ENCODE measurements at regions of chr15 and their contacts with region 1.

Region 1: GRCh38 chr15:66851226-66852071 is 149.4 kb downstream of the SMAD6 start:
- DNase-seq: peak; percentile 84 to 91
- H3K4me3 ChIP-seq: peak overlapping the region in 1 of 2 donors; percentile 18
- H3K27ac ChIP-seq: peak overlapping the region; percentile 82
- H3K4me1 ChIP-seq: peaks cover 32% of the 10 kb centered on the region
- H3K27me3 ChIP-seq: no peaks in the 10 kb centered on the region
- CTCF ChIP-seq: peak; percentile 87 to 98 (median 98)
- POLR2A ChIP-seq: no peak

Region 2: DNA sequence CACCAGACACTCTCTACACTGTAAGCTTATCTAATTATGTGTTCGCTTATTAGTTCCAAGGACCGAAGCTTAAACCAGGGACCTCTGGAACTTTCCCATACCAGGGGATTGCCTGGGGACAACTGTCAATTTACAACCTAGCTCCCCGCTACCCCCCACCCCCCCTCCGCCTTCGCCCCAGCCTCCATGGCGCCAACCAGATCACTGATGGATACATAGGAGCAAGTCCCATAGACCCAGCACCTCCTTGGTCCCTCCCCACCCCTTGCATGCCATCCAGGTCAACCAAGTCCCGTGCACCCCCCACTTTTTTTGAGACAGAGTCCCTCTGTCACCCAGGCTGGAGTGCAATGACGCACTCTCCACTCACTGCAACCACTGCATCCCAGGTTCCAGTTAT is 1716.9 kb before region 1 on chr15:
- intact Hi-C with region 1: no loop called
- DNase-seq: no peak
- H3K4me3 ChIP-seq: peak overlapping the region in 1 of 2 donors; percentile 69
- H3K27ac ChIP-seq: no peak overlapping the region
- H3K4me1 ChIP-seq: peaks cover 34% of the 10 kb centered on the region
- H3K27me3 ChIP-seq: no peaks in the 10 kb centered on the region
- CTCF ChIP-seq: no peak
- POLR2A ChIP-seq: no peak

Region 3: GRCh38 chr15:66603301-66604179 is 247.9 kb before region 1 on chr15:
- intact Hi-C with region 1: loop called (anchors 5 kb)
- DNase-seq: no peak
- H3K4me3 ChIP-seq: no peak overlapping the region
- H3K27ac ChIP-seq: no peak overlapping the region
- H3K4me1 ChIP-seq: no peaks in the 10 kb centered on the region
- H3K27me3 ChIP-seq: no peaks in the 10 kb centered on the region
- CTCF ChIP-seq: peak; percentile 33 to 89 (median 80)
- POLR2A ChIP-seq: no peak

Region 4: GRCh38 chr15:66619151-66619903 is 232.1 kb before region 1 on chr15:
- intact Hi-C with region 1: loop called (anchors 5 kb)
- DNase-seq: no peak
- H3K4me3 ChIP-seq: no peak overlapping the region
- H3K27ac ChIP-seq: peak overlapping the region; percentile 83
- H3K4me1 ChIP-seq: peaks cover 50% of the 10 kb centered on the region
- H3K27me3 ChIP-seq: no peaks in the 10 kb centered on the region
- CTCF ChIP-seq: peak; percentile 73 to 86 (median 80)
- POLR2A ChIP-seq: no peak

Region 5: GRCh38 chr15:66707310-66708082 is 144.0 kb before region 1 on chr15:
- intact Hi-C with region 1: loop called (anchors 2 kb)
- DNase-seq: no peak
- H3K4me3 ChIP-seq: peak overlapping the region; percentile 2 to 14
- H3K27ac ChIP-seq: peak overlapping the region; percentile 65
- H3K4me1 ChIP-seq: peaks cover 56% of the 10 kb centered on the region
- H3K27me3 ChIP-seq: no peaks in the 10 kb centered on the region
- CTCF ChIP-seq: no peak
- POLR2A ChIP-seq: no peak

Region 6: DNA sequence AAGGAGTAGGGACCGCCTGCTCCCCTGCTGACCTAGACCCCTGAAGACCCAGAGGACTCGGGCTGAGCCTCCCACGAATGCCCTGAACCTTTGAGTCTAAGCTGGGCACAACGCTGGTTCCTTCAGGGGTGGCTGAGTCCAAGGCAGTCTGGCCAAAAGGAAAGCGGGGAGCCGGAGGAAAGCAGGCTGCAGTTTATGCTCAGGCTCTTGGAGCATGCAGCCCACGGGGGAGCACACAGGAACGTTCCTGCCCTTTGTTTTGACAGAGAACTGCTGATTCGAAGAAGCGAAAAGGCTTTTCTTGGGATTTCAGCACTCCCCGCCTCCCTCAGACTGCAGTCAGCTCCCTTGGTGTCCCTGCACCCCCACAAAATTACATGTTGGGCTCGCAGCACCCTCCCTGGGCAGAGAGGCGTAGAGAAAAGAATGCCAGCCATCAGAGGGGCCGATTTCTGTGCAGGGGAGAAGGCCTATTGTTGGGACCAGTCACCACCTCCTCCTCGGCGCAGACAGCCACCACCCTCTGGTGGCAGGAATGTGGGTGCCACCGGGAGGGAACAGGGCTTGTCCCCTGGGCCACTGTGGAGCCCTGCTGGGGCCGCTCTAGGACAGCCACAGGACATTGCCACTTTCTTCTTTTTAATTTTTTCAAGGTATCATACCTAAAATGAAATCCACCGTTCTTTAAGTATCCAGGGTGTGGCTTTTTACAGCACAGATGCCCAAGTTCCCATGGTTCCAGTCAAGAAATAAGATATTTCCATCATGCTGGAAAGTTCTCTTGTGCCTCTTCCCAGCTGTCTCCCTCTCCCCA is 77.2 kb before region 1 on chr15:
- intact Hi-C with region 1: loop called (anchors 5 kb)
- DNase-seq: no peak
- H3K4me3 ChIP-seq: no peak overlapping the region
- H3K27ac ChIP-seq: peak overlapping the region; percentile 51
- H3K4me1 ChIP-seq: peaks cover 40% of the 10 kb centered on the region
- H3K27me3 ChIP-seq: no peaks in the 10 kb centered on the region
- CTCF ChIP-seq: peak; percentile 89 to 99 (median 91)
- POLR2A ChIP-seq: no peak

Region 7: GRCh38 chr15:66789029-66790025 is 62.1 kb before region 1 on chr15:
- intact Hi-C with region 1: loop called (anchors 5 kb)
- DNase-seq: no peak
- H3K4me3 ChIP-seq: no peak overlapping the region
- H3K27ac ChIP-seq: no peak overlapping the region
- H3K4me1 ChIP-seq: no peaks in the 10 kb centered on the region
- H3K27me3 ChIP-seq: no peaks in the 10 kb centered on the region
- CTCF ChIP-seq: peak in 1 of 3 experiments; percentile 48
- POLR2A ChIP-seq: no peak

Region 8: DNA sequence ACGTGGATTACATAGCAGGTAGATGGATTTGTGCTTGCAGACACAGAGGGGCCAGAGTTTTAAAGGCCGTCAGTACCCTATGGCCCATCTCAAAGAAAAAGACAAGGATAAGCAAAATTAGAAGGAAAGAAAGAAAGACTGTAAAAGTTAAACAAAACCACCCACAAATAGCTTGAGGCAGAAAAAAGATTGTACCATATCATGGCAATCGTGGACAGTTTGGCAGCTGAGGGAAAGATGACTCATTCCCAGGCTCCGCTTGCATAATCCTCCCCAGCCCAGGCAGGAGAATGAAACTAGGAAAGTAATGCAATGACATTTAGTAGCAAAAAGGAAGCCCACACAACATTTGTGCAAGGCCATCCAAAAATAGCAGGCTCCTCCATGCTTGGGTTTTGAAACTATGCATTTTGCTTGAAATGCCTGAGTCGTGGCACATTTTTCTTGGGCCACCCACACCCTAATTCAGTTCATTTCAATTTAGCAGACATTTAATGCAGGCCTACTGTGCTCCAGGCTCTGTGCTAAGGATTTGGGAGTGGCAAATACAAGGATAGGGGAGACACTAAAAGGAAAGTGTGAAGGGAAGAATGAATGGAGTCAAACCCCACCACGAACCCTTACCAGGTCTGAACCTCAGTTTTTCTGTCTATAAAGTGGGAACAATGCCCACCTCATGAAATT is 173.0 kb after region 1 on chr15:
- intact Hi-C with region 1: no loop called
- DNase-seq: peak in 1 of 2 donors; percentile 94
- H3K4me3 ChIP-seq: no peak overlapping the region
- H3K27ac ChIP-seq: peak overlapping the region; percentile 61
- H3K4me1 ChIP-seq: peaks cover 37% of the 10 kb centered on the region
- H3K27me3 ChIP-seq: no peaks in the 10 kb centered on the region
- CTCF ChIP-seq: no peak
- POLR2A ChIP-seq: no peak